Right cardiac atrium (tissue), 5 donors: ENCODE measurements at regions of chr17 and their contacts with region 1.

Region 1: GRCh38 chr17:39508987-39509386 is 47.7 kb downstream of the CDK12 start:
- DNase-seq: no peak
- ATAC-seq: no peak
- H3K4me3 ChIP-seq: no peak overlapping the region
- H3K27ac ChIP-seq: no peak overlapping the region
- H3K4me1 ChIP-seq: no peaks in the 10 kb centered on the region
- H3K27me3 ChIP-seq: no peaks in the 10 kb centered on the region

Region 2: DNA sequence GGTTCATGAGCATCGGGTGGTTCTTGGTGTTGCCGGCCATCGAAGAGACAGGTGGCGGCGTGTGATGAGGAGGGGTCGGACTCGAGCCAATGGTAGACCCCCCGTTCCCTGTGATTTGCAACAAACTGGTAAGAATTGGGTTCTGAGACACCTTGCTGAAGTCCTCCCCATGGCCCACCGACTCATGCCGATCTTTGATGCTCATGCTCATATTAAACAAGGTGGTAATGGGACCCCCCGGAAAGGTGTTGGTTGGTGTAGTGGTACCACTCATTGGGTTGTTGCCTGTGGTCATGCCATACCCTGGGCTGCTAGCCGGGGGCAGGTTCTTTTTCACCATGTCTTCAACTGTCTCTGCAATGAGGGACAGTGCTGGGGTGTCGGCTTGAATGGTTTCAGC is 98.7 kb before region 1 on chr17:
- intact Hi-C with region 1: loop called in 1 of 4 experiments (anchors 10 kb)
- DNase-seq: no peak
- ATAC-seq: no peak
- H3K4me3 ChIP-seq: no peak overlapping the region
- H3K27ac ChIP-seq: no peak overlapping the region
- H3K4me1 ChIP-seq: no peaks in the 10 kb centered on the region
- H3K27me3 ChIP-seq: no peaks in the 10 kb centered on the region